H1 (cell line): ENCODE measurements at regions of chr20 and their contacts with region 1.

Region 1: GRCh38 chr20:57907131-57908003 is 197.6 kb upstream of the PMEPA1 start:
- DNase-seq: no peak
- H3K4me3 ChIP-seq: no peak overlapping the region
- H3K27ac ChIP-seq: no peak overlapping the region
- H3K4me1 ChIP-seq: 0 out of 7 replicates have a peak, but pooled peaks cover 0 to 2% (median 0%) of the 10 kb centered on the region in 4 experiments
- H3K27me3 ChIP-seq: no peaks in the 10 kb centered on the region
- CTCF ChIP-seq: no peak
- EP300 ChIP-seq: no peak
- POLR2A ChIP-seq: no peak
- RAD21 ChIP-seq: no peak

Region 2: GRCh38 chr20:57930351-57930750 is 23.0 kb after region 1 on chr20:
- CTCF ChIA-PET with region 1: interaction called, 11 read pairs
- POLR2A ChIA-PET with region 1: no interaction called
- DNase-seq: no peak
- H3K4me3 ChIP-seq: no peak overlapping the region
- H3K27ac ChIP-seq: no peak overlapping the region
- H3K4me1 ChIP-seq: no peaks in the 10 kb centered on the region
- H3K27me3 ChIP-seq: no peaks in the 10 kb centered on the region
- CTCF ChIP-seq: no peak
- EP300 ChIP-seq: no peak
- POLR2A ChIP-seq: no peak
- RAD21 ChIP-seq: no peak

Region 3: DNA sequence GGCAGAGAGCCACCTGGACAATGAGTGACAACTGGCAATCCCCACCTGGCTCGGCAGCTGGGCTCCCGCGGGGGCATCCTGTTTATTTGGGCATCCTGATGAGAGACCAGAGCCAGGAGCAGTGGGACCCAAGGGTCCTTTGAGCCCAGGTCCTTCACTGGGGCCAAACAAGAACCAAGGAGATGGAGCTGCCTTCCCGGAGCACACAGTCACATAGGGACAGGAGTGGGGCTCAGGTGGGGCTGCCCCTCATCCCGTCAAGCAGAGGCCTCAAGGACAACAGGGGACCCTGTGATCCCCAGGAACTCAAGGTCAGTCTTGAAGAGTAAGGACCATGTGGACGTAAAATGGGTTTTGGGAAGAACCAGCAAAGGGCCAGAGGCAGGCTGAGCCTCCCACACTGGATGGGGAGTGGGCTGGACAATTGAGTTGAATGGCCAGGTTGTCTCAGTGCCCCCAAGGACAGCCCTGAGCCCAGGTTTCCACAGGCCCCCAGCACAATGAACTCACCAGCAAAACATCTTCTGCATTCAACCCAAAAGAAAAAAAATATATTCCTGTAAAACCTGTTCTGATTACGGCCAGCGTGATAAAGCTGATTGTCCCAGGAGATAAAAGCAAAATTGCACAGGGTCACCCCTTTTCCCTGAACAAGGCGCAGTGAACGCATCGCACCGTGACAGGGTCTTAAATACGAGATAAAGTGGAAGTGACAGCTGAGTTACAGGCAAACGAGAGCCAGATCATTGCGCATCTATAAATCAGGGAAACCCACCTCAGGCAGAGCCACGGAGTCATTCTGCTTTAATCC is 234.8 kb after region 1 on chr20:
- CTCF ChIA-PET with region 1: no interaction called
- POLR2A ChIA-PET with region 1: no interaction called
- DNase-seq: no peak
- H3K4me3 ChIP-seq: no peak overlapping the region
- H3K27ac ChIP-seq: no peak overlapping the region
- H3K4me1 ChIP-seq: no peaks in the 10 kb centered on the region; a peak in 1 of 7 replicates
- H3K27me3 ChIP-seq: no peaks in the 10 kb centered on the region; a peak in 2 of 7 replicates
- CTCF ChIP-seq: no peak
- EP300 ChIP-seq: no peak
- POLR2A ChIP-seq: no peak
- RAD21 ChIP-seq: no peak